IMR-90 (cell line): ENCODE measurements at regions of chr7 and their contacts with region 1.

Region 1: GRCh38 chr7:95560674-95561073 is 35.6 kb downstream of the PDK4 start:
- DNase-seq: no peak
- ATAC-seq: no peak
- H3K4me3 ChIP-seq: no peak overlapping the region
- H3K27ac ChIP-seq: no peak overlapping the region
- H3K4me1 ChIP-seq: no peaks in the 10 kb centered on the region
- H3K27me3 ChIP-seq: peaks cover 2% of the 10 kb centered on the region
- CTCF ChIP-seq: no peak
- POLR2A ChIP-seq: no peak
- RAD21 ChIP-seq: no peak

Region 2: GRCh38 chr7:95501261-95501832 is 59.3 kb before region 1 on chr7:
- CTCF ChIA-PET with region 1: no interaction called
- POLR2A ChIA-PET with region 1: no interaction called
- dilution Hi-C with region 1: no loop called
- in situ Hi-C with region 1: no loop called
- intact Hi-C with region 1: no loop called
- DNase-seq: no peak
- ATAC-seq: no peak
- H3K4me3 ChIP-seq: no peak overlapping the region
- H3K27ac ChIP-seq: no peak overlapping the region
- H3K4me1 ChIP-seq: no peaks in the 10 kb centered on the region
- H3K27me3 ChIP-seq: peaks cover 4% of the 10 kb centered on the region; the same call in 1 of the 2 replicates
- CTCF ChIP-seq: no peak
- POLR2A ChIP-seq: no peak
- RAD21 ChIP-seq: no peak

Region 3: DNA sequence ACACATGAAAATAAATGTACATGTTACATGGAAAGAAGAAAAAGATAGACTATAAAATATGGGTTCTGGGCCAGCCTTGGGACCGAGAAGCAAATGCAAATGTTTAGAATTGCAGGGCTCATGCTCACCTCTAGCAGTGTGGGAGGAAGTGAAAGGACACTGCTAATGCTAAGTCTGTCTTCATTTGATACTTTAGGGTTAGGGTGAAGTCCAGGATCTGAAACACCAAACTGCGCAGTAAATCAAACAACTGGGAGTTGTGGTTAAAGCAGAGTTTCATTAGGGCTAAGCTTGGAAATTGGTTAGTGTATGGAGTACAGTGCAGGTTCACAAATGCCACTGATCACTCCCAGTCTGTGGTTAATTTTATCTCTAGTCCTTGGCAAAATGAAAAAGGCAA is 108.8 kb after region 1 on chr7:
- CTCF ChIA-PET with region 1: no interaction called
- POLR2A ChIA-PET with region 1: no interaction called
- dilution Hi-C with region 1: no loop called
- in situ Hi-C with region 1: no loop called
- intact Hi-C with region 1: loop called (anchors 5 kb)
- DNase-seq: no peak
- ATAC-seq: no peak
- H3K4me3 ChIP-seq: no peak overlapping the region
- H3K27ac ChIP-seq: no peak overlapping the region
- H3K4me1 ChIP-seq: no peaks in the 10 kb centered on the region
- H3K27me3 ChIP-seq: no peaks in the 10 kb centered on the region
- CTCF ChIP-seq: no peak
- POLR2A ChIP-seq: no peak
- RAD21 ChIP-seq: no peak